PC-3 (cell line): ENCODE measurements at regions of chr3 and their contacts with region 1.

Region 1: DNA sequence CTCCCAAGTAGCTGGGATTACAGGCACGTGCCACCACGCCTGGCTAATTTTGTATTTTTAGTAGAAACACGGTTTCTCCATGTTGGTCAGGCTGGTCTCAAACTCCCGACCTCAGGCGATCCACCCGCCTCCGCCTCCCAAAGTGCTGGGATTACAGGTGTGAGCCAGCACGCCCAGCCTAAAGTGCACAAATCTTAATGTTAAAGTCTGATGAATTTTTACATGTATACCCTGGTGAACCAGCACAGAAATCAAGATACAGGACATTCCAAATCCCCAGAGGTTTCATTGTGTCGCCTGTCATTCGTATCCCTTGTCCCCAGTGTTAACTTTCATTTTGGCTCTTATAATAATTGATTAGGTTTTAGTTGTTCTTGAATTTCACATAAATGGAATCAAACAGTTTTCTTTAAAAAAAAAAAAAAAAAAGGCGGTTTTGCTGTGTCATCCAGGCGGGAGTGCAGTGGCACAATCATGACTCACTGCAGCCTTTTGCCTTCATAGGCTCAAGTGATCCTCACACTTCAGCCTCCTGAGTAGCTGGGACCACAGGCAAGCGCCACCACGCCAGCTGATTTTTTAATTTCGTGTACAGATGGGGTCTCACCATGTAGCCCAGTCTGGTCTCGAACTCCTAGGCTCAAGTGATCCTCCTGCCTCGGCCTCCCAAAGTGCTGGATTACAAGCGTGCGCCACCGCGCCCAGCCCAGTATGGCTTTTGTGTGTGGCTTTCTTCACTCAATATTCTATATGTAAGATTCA is 1.5 kb upstream of the TM4SF19 start:
- DNase-seq: peak; percentile 82
- ATAC-seq: peak; percentile 30
- H3K4me3 ChIP-seq: no peak overlapping the region
- H3K27ac ChIP-seq: peak overlapping the region; percentile 80
- H3K4me1 ChIP-seq: peaks cover 63% of the 10 kb centered on the region
- H3K27me3 ChIP-seq: no peaks in the 10 kb centered on the region
- CTCF ChIP-seq: no peak

Region 2: DNA sequence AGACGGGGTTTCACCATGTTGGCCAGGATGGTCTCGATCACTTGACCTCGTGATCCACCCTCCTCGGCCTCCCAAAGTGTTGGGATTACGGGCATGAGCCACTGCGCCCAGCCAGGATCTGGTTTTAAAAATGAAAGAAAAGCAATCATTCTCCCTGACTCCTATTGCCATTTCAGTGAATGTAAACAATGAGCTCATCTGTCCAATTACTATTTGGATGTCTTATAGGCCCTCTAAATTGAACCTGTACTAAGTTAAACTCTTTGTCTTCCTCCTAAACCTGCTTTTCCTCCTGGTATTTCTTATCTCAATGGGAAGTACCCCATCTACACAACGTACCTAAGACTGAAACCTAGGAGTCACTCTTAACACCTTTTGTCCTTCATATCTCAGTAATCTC is 75.9 kb before region 1 on chr3:
- CTCF ChIA-PET with region 1: interaction called, 10 read pairs
- POLR2A ChIA-PET with region 1: no interaction called
- intact Hi-C with region 1: no loop called
- DNase-seq: no peak
- ATAC-seq: no peak
- H3K4me3 ChIP-seq: no peak overlapping the region
- H3K27ac ChIP-seq: no peak overlapping the region
- H3K4me1 ChIP-seq: peaks cover 8% of the 10 kb centered on the region
- H3K27me3 ChIP-seq: no peaks in the 10 kb centered on the region
- CTCF ChIP-seq: no peak

Region 3: GRCh38 chr3:196388956-196389355 is 49.3 kb after region 1 on chr3:
- CTCF ChIA-PET with region 1: no interaction called
- POLR2A ChIA-PET with region 1: no interaction called
- intact Hi-C with region 1: no loop called
- DNase-seq: no peak
- ATAC-seq: peak; percentile 27; the same call in 1 of the 2 replicates
- H3K4me3 ChIP-seq: no peak overlapping the region
- H3K27ac ChIP-seq: no peak overlapping the region
- H3K4me1 ChIP-seq: no peaks in the 10 kb centered on the region
- H3K27me3 ChIP-seq: no peaks in the 10 kb centered on the region
- CTCF ChIP-seq: no peak

Region 4: DNA sequence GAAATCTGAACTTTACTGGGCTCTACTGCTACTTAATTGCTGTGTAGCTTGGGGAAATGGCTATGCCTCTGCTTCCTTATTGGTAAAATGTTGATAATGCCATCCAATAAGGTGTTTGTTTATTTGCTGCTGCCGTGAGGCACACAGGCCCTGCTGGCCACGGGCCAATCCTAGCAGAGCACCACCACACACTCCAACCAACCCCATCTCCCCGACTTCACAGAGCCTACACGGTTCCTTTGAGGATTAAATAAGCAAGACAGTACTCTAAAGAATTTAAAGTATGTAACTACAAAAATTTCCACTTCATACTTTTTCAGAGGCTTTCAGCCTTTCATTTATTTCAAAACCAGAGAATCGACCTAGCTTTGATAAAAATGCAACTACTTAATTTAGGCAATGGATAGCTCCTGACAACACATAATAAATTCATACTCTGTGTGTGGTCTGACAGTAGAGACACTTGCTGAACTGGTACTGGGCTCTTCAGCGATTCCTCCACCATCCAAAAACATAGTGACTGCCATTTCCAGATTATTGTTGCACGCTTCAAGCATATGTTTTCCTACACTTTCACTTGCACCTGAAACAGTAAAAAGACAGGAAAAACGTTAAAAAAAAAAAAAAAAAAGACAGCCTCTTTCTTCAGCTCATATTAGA is 67.3 kb after region 1 on chr3:
- CTCF ChIA-PET with region 1: no interaction called
- POLR2A ChIA-PET with region 1: interaction called, 12 read pairs
- intact Hi-C with region 1: no loop called
- DNase-seq: no peak
- ATAC-seq: no peak
- H3K4me3 ChIP-seq: no peak overlapping the region
- H3K27ac ChIP-seq: no peak overlapping the region
- H3K4me1 ChIP-seq: no peaks in the 10 kb centered on the region
- H3K27me3 ChIP-seq: no peaks in the 10 kb centered on the region
- CTCF ChIP-seq: no peak

Region 5: DNA sequence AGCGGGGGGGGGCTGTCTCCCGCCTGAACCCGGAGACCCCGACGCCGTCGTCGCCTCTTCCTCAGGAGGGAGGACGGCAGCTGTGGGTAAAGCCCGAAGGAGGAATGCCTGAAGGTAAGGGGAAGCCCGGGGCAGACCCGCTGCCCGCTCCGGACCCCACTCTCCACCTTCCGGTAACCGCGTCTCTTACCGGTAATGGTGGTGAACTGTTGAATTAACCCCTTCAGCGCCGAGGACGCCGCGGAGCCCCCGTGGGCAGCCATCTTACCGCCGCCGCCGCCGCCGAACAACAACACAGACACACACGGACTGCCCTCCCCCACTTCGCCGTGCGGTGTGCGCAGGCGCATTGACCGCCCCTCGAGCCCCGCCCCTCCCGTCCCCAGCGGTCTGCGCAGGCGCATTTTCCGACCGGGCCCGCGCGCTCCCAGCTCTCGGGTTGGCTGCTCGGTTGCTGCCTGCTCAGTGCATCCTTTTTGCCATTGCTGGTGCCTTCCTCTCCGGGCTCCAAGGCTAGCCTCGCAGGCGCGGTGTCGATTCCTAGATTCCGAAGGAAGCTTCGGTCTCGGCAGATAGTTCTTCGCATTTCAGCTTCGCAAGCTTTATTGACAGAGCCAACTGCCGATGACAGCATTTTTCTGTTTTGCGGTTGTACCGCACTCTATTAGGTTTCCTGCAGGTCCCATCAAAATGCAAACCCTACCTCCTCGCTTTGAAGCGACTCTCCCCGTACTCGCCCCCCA is 92.6 kb after region 1 on chr3 and contains the start of gene UBXN7:
- CTCF ChIA-PET with region 1: no interaction called
- POLR2A ChIA-PET with region 1: no interaction called
- intact Hi-C with region 1: loop called (anchors 2 kb)
- DNase-seq: peak; percentile 94
- ATAC-seq: peak; percentile 93
- H3K4me3 ChIP-seq: peak within 1 kb of the TSS; percentile 94
- H3K27ac ChIP-seq: peak within 1 kb of the TSS; percentile 7
- H3K4me1 ChIP-seq: peaks cover 11% of the 10 kb centered on the region; the same call in 1 of the 2 replicates
- H3K27me3 ChIP-seq: no peaks in the 10 kb centered on the region
- CTCF ChIP-seq: no peak
- total RNA-seq, gene UBXN7: 10.2 and 10.5 TPM in 2 replicates

Region 6: DNA sequence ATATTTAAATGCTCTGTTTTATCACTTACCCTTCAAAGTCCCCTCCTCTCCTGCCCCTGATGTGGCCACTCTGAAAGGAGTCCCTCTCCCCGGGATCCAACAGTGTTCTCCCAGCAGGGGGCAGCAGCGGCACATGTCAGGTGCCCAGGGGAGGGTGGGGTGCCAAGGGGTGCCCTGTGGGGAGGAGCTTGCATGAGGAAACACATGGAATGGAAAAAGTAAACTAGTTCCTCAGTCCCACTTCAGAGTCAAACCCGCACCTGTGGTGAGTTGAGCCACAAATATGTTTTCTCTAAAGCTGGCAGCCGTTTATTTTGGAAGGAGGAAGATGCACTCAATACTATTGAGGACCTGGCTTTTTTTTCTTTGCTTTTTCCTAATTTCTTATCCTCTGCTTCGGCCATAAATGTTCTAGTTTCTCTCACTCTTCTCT is 269.7 kb after region 1 on chr3:
- CTCF ChIA-PET with region 1: no interaction called
- POLR2A ChIA-PET with region 1: no interaction called
- intact Hi-C with region 1: no loop called
- DNase-seq: peak; percentile 93
- ATAC-seq: peak; percentile 98
- H3K4me3 ChIP-seq: no peak overlapping the region
- H3K27ac ChIP-seq: no peak overlapping the region
- H3K4me1 ChIP-seq: peaks cover 15% of the 10 kb centered on the region; the same call in 1 of the 2 replicates
- H3K27me3 ChIP-seq: no peaks in the 10 kb centered on the region
- CTCF ChIP-seq: peak; percentile 98

Region 7: DNA sequence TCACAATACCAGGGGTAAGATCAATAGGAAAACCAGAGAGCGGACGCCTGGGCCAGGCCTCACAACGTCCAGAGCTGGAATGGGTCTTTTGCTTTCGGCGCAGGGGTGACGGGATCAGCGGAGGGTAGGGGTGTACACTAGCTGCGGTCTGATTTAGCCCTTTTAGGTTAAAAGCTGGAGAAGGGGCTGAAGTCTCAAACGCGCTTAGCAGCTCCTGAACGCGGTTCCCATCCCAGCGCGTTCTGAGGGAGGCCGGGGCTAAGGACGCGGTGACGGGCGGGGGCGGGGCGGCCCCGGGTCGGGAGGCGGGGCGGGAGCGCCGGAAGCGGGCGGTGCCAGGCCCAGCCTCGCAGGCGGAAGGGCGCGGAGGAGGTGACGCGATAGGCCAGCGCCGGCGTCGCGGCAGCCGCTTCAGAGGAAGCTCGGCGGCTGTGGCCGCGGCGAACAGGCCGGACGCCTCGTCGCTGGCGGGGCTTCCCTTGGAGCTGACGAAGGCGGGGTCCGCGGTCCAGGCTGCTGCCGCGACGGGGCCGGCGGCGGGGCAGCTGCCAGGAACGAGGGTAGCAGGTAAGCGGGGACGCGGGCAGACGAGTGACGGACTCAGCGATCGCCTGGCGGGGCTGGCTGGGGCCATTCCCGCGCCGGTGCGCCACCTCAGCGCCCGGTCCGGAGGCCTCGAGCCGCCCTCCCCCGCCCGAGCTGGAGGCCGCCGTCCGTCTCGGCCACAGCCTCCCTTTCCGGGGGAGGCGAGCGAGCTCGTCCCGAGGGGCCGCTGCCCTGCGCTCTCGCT is 528.0 kb after region 1 on chr3 and contains the start of gene SENP5:
- CTCF ChIA-PET with region 1: no interaction called
- POLR2A ChIA-PET with region 1: interaction called, 14 read pairs
- intact Hi-C with region 1: no loop called
- DNase-seq: peak; percentile 91
- ATAC-seq: peak; percentile 95
- H3K4me3 ChIP-seq: peak within 1 kb of the TSS; percentile 97
- H3K27ac ChIP-seq: 0 out of 2 replicates have a peak within 1 kb of the TSS, but pooled peaks have one; percentile 24
- H3K4me1 ChIP-seq: peaks cover 10% of the 10 kb centered on the region
- H3K27me3 ChIP-seq: no peaks in the 10 kb centered on the region
- CTCF ChIP-seq: no peak
- total RNA-seq, gene SENP5: 31.4 and 34.2 TPM in 2 replicates